ENCODE measurements at regions of chr3 and their contacts with region 1.

Region 1: GRCh38 chr3:114383875-114384557 is 90.2 kb downstream of the TIGIT start:
- DNase-seq: peak; percentile 66
- H3K4me3 ChIP-seq: peak overlapping the region; percentile 12 to 64 (median 25)
- H3K27ac ChIP-seq: peak overlapping the region; percentile 86
- H3K4me1 ChIP-seq: peaks cover 29% of the 10 kb centered on the region
- H3K27me3 ChIP-seq: no peaks in the 10 kb centered on the region
- CTCF ChIP-seq: peak; percentile 97 to 98

Region 2: DNA sequence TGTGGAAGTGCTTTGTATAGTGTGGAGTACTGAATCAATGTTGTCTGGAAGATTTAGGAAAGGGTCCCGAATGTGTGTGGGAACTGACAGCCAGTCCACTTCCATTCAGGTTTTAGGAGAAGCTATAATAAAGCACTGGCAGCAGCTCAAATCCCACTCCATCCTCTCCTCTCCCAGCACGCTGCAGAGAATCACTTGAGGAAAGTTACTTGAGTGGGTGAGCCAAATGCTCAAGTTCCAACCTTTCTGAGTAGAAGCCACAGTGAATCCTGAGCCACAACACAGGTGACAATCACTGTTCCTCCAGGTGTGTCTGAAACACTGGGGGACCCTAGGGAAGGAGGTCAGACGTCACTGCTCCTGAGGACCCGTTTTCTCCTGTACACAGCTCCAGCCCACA is 16.4 kb after region 1 on chr3:
- CTCF ChIA-PET with region 1: interaction called, 20 read pairs
- dilution Hi-C with region 1: no loop called
- in situ Hi-C with region 1: no loop called
- intact Hi-C with region 1: no loop called
- DNase-seq: no peak
- H3K4me3 ChIP-seq: peak overlapping the region; percentile 22 to 36 (median 28)
- H3K27ac ChIP-seq: peak overlapping the region; percentile 98
- H3K4me1 ChIP-seq: peaks cover 29% of the 10 kb centered on the region
- H3K27me3 ChIP-seq: no peaks in the 10 kb centered on the region
- CTCF ChIP-seq: no peak

Region 3: GRCh38 chr3:114447545-114447944 is 63.5 kb after region 1 on chr3:
- CTCF ChIA-PET with region 1: interaction called, 23 read pairs
- dilution Hi-C with region 1: no loop called
- in situ Hi-C with region 1: no loop called
- intact Hi-C with region 1: loop called (anchors 1 kb)
- DNase-seq: peak; percentile 57
- H3K4me3 ChIP-seq: peak overlapping the region in 2 of 3 experiments; percentile 51
- H3K27ac ChIP-seq: peak overlapping the region; percentile 96
- H3K4me1 ChIP-seq: peaks cover 37% of the 10 kb centered on the region
- H3K27me3 ChIP-seq: no peaks in the 10 kb centered on the region
- CTCF ChIP-seq: peak in 1 of 2 donors; percentile 19

Region 4: DNA sequence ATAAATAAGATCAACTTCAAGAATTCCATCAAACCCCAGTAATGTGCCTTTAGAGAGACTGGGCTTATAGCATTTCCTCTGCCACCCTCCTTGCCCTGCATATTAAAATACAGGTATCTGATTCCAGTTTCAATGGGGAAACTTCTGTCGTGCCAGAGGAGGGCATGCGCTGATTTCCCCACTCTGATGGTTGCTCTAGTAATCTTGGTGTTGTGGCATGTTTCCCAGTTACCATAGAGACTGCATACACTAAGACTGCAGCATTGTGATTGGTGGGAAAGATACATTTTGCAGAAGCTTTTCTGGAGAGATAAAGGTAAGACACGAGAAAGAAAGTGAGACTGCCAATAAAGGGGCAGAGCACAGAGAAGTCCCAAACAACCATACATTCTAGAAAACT is 135.4 kb after region 1 on chr3:
- CTCF ChIA-PET with region 1: no interaction called
- dilution Hi-C with region 1: no loop called
- in situ Hi-C with region 1: no loop called
- intact Hi-C with region 1: loop called (anchors 5 kb)
- DNase-seq: peak; percentile 81
- H3K4me3 ChIP-seq: no peak overlapping the region
- H3K27ac ChIP-seq: peak overlapping the region; percentile 11
- H3K4me1 ChIP-seq: no peaks in the 10 kb centered on the region
- H3K27me3 ChIP-seq: no peaks in the 10 kb centered on the region
- CTCF ChIP-seq: no peak

Region 5: GRCh38 chr3:114721864-114722263 is 337.8 kb after region 1 on chr3:
- CTCF ChIA-PET with region 1: no interaction called
- dilution Hi-C with region 1: no loop called
- in situ Hi-C with region 1: no loop called
- intact Hi-C with region 1: no loop called
- DNase-seq: no peak
- H3K4me3 ChIP-seq: no peak overlapping the region
- H3K27ac ChIP-seq: no peak overlapping the region
- H3K4me1 ChIP-seq: no peaks in the 10 kb centered on the region
- H3K27me3 ChIP-seq: no peaks in the 10 kb centered on the region
- CTCF ChIP-seq: no peak

Region 6: DNA sequence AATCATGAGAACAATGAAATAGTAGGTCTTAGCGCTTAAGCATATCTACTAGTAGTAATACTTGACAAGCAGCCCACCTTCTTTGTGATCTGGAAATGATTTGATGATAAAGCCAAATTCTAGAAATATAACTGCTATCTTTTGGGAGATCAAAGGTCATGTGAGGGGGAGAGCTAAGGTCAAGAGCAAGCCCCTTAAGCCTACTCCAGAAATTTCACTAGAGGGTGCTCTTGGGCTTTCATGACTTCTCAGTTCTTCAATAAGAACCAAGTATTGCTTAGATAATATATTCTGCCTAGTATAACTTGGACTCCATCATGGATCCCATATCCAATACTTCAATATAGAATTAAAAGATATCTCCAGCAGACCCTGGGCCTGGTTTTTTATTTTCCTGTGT is 443.5 kb after region 1 on chr3:
- CTCF ChIA-PET with region 1: no interaction called
- dilution Hi-C with region 1: no loop called
- in situ Hi-C with region 1: no loop called
- intact Hi-C with region 1: loop called (anchors 5 kb)
- DNase-seq: peak; percentile 18
- H3K4me3 ChIP-seq: no peak overlapping the region
- H3K27ac ChIP-seq: no peak overlapping the region
- H3K4me1 ChIP-seq: no peaks in the 10 kb centered on the region
- H3K27me3 ChIP-seq: no peaks in the 10 kb centered on the region
- CTCF ChIP-seq: peak; percentile 58 to 60

Region 7: DNA sequence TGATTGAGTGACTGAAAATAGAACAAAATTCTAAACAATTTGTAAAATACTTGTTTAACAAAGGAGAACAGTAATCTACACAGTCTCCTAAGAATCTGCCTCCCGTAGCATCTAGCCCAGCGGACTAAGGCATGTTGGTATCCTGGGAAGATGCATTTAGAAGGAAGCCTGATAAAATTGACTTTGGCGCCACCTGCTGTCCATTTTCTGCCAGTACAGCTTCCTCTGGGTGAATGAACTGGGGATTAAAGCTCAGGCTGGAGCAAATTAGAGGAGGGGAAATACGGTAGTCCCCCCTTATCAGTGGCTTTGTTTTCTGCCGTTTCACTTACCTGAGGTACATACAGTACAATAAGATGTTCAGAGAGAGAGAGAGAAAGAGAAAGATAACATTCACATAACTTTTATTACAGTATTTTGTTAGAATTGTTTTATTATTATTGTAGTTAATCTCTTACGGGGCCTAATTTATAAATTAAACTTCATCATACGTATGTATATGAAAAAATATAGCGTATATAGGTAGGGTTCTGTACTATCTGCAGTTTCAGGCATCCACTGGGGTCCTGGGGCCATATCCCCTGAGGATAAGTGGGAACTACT is 1430.9 kb after region 1 on chr3:
- CTCF ChIA-PET with region 1: no interaction called
- dilution Hi-C with region 1: no loop called
- in situ Hi-C with region 1: no loop called
- intact Hi-C with region 1: loop called (anchors 2 kb)
- DNase-seq: peak; percentile 60
- H3K4me3 ChIP-seq: no peak overlapping the region
- H3K27ac ChIP-seq: peak overlapping the region; percentile 15
- H3K4me1 ChIP-seq: peaks cover 3% of the 10 kb centered on the region
- H3K27me3 ChIP-seq: no peaks in the 10 kb centered on the region
- CTCF ChIP-seq: peak; percentile 79 to 90

Measured in mammary epithelial cell (primary cell).